ENCODE measurements at regions of chr15 and their contacts with region 1.

Region 1: DNA sequence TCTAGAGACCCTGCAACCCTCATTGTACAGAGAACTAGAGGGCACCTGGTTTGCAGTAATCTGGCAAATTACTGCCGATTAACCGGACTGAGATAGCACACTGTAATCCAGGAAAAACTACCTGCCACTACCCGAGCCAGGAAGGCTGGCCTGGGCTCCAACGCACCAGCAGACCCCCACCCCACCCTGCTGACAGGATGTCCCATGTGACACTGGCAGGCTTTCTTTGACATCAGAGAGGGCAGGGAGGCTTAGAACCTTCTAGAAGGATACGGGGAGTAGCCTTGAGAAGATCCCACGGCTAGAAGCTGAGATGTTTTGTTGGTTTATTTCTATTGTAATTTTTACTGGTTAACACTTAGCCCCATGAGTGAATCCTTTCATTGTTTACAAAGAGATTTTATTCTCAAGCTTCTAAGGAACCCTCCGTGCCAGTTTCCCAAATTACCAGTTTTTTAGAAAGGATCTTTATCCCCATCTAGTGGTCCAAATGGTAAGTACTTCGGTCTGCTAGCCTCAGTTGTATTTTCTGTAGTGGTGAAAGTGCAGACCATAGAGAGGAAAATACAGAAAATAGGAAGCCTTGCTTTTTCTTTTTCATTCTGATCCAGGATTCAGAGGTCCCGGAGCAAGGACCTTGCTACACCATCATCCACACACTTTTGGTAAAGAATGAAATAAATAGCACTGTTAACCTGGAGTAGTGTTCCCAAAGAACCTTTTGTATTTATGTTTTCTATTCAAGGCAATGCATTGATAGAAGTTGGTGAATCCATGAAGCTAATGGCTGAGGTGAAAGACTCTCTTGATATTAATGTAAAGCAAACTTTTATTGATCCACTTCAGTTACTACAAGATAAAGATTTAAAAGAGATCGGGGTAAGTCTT is 81.9 kb upstream of the ADAMTSL3 start:
- DNase-seq: no peak
- H3K4me3 ChIP-seq: no peak overlapping the region
- H3K27ac ChIP-seq: no peak overlapping the region
- H3K4me1 ChIP-seq: no peaks in the 10 kb centered on the region
- H3K27me3 ChIP-seq: no peaks in the 10 kb centered on the region
- CTCF ChIP-seq: peak; percentile 62 to 70

Region 2: DNA sequence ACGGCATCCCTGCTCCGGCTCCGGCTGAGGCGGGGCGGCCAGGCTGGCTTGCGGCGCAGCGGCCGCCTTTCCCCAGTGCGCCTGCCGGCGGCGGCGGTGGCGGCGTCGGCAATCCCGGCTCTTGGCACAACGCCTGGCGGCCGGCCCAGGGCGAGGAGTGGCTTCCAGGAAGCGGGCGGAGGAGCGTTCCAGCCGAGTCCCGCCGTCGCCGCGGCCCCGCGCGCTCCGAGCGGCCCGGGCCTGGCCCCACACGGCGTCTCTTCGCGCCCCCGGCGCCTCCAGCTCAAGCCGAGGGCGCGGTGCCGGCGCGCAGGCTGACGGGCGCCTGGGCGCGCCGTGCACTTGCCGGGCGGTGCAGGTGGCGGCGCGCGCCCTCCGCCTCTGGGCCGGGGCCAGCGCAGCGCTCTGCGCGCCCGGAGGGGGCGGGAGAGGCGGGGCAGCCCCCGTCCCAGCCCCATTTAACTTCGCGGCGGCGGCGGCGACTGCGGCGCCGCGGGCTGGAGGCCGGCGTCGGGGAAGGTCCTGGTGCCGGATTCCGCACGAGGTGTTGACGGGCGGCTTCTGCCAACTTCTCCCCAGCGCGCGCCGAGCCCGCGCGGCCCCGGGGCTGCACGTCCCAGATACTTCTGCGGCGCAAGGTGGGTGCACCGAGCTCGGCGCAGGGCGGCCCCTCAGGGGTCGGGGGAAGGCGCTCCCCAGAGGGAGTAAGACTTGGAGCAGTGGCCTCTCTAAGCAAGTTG is 81.7 kb after region 1 on chr15 and contains the start of gene ADAMTSL3:
- CTCF ChIA-PET with region 1: no interaction called
- dilution Hi-C with region 1: no loop called
- in situ Hi-C with region 1: no loop called
- intact Hi-C with region 1: loop called (anchors 5 kb)
- DNase-seq: peak; percentile 48
- H3K4me3 ChIP-seq: peak within 1 kb of the TSS in 2 of 3 experiments; percentile 9 to 10
- H3K27ac ChIP-seq: no peak within 1 kb of the TSS
- H3K4me1 ChIP-seq: peaks cover 7% of the 10 kb centered on the region
- H3K27me3 ChIP-seq: peaks cover 17% of the 10 kb centered on the region
- CTCF ChIP-seq: no peak
- total RNA-seq, gene ADAMTSL3: 0.17 TPM in 1 of 2 donors, not detected in the other